ENCODE measurements at regions of chr2 and their contacts with region 1.

Region 1: DNA sequence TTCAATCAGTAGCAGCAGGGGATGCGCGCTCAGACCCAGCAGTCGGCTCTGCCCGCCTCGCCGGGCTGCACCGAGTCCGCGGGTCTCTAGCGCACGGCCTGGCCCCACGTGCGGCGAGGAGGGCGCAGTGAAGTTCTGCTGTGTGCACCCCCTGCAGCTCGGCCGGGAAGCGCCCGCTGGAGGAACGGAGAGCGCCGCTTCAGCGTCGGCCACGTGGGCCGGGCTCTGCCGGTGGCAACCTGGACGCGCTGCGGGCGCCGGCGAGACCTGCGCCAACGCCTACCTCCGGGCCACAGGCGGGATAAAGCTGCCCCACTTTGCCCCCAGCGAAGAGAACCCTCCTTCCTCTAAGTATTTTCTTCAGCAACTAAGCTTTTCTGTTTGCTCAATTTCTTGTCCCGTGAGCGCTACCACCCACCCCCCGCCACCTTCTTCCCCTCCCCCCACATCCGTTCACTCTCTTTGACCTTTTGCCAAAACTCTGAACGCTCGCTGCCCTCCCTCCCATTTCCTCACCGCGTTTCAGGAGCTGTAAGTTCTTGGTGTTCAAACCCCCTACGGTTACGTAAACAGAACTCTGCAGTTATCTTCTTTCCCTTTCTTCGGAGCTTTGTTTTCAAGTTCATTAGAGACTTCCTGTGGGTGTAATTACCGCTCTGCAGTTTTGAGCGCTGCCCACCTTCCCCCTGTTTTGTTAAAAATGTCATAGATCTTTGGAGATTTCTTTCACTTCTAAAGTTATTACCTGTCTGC is 42.6 kb upstream of the EDAR start:
- DNase-seq: peak; percentile 45 to 98 (median 93)
- ATAC-seq: peak; percentile 83
- H3K4me3 ChIP-seq: peak overlapping the region; percentile 58
- H3K4me3 Mint-ChIP-seq: peak overlapping the region; percentile 45 to 91 (median 77)
- H3K27ac ChIP-seq: peak overlapping the region; percentile 83
- H3K27ac Mint-ChIP-seq: peak overlapping the region; percentile 84 to 99 (median 98)
- H3K4me1 ChIP-seq: peaks cover 44 to 72% of the 10 kb centered on the region in 2 donors
- H3K4me1 Mint-ChIP-seq: peaks cover 33 to 84% (median 68%) of the 10 kb centered on the region in 7 donors
- H3K27me3 ChIP-seq: no peaks in the 10 kb centered on the region
- H3K27me3 Mint-ChIP-seq: no peaks in the 10 kb centered on the region

Region 2: GRCh38 chr2:108855194-108855593 is 176.5 kb before region 1 on chr2:
- CTCF ChIA-PET with region 1: no interaction called
- POLR2A ChIA-PET with region 1: no interaction called
- intact Hi-C with region 1: loop called in 1 of 2 experiments (anchors 1 kb)
- DNase-seq: peak in 6 of 9 donors; percentile 27 to 66 (median 54)
- ATAC-seq: peak; percentile 85
- H3K4me3 ChIP-seq: no peak overlapping the region
- H3K4me3 Mint-ChIP-seq: no peak overlapping the region
- H3K27ac ChIP-seq: no peak overlapping the region
- H3K27ac Mint-ChIP-seq: no peak overlapping the region
- H3K4me1 ChIP-seq: no peaks in the 10 kb centered on the region
- H3K4me1 Mint-ChIP-seq: peaks cover 0 to 8% (median 4%) of the 10 kb centered on the region in 7 donors
- H3K27me3 ChIP-seq: no peaks in the 10 kb centered on the region
- H3K27me3 Mint-ChIP-seq: no peaks in the 10 kb centered on the region

Region 3: GRCh38 chr2:108988796-108989713 is 42.6 kb before region 1 on chr2 and contains the start of gene EDAR:
- CTCF ChIA-PET with region 1: interaction called, 29 read pairs
- POLR2A ChIA-PET with region 1: interaction called, 49 read pairs
- intact Hi-C with region 1: loop called in 1 of 2 experiments (anchors 1 kb)
- DNase-seq: peak; percentile 24 to 72 (median 61)
- ATAC-seq: peak; percentile 85
- H3K4me3 ChIP-seq: peak within 1 kb of the TSS; percentile 80
- H3K4me3 Mint-ChIP-seq: peak within 1 kb of the TSS; percentile 77 to 99 (median 96)
- H3K27ac ChIP-seq: peak within 1 kb of the TSS; percentile 74
- H3K27ac Mint-ChIP-seq: peak within 1 kb of the TSS in 8 of 9 donors; percentile 83 to 98 (median 96)
- H3K4me1 ChIP-seq: peaks cover 2 to 35% of the 10 kb centered on the region in 2 donors
- H3K4me1 Mint-ChIP-seq: peaks cover 21 to 74% (median 69%) of the 10 kb centered on the region in 7 donors
- H3K27me3 ChIP-seq: no peaks in the 10 kb centered on the region
- H3K27me3 Mint-ChIP-seq: peaks cover 0 to 37% (median 0%) of the 10 kb centered on the region in 5 donors
- total RNA-seq, gene EDAR: 0.17 to 26.8 (median 21.6) TPM

Region 4: GRCh38 chr2:109046925-109047508 is 15.4 kb after region 1 on chr2:
- CTCF ChIA-PET with region 1: no interaction called
- POLR2A ChIA-PET with region 1: interaction called, 19 read pairs
- intact Hi-C with region 1: loop called in 1 of 2 experiments (anchors 1 kb)
- DNase-seq: no peak
- ATAC-seq: peak; percentile 40
- H3K4me3 ChIP-seq: no peak overlapping the region
- H3K4me3 Mint-ChIP-seq: peak overlapping the region in 4 of 10 donors; percentile 29 to 56 (median 53)
- H3K27ac ChIP-seq: no peak overlapping the region
- H3K27ac Mint-ChIP-seq: peak overlapping the region in 5 of 9 donors; percentile 18 to 84 (median 74)
- H3K4me1 ChIP-seq: peaks cover 0 to 23% of the 10 kb centered on the region in 2 donors
- H3K4me1 Mint-ChIP-seq: peaks cover 5 to 61% (median 44%) of the 10 kb centered on the region in 7 donors
- H3K27me3 ChIP-seq: no peaks in the 10 kb centered on the region
- H3K27me3 Mint-ChIP-seq: peaks cover 0 to 2% (median 0%) of the 10 kb centered on the region in 5 donors

Region 5: GRCh38 chr2:109128048-109128465 is 96.4 kb after region 1 on chr2:
- CTCF ChIA-PET with region 1: interaction called, 3 read pairs
- POLR2A ChIA-PET with region 1: interaction called, 28 read pairs
- intact Hi-C with region 1: loop called (anchors 1 to 5 kb)
- DNase-seq: peak; percentile 49 to 76 (median 70)
- ATAC-seq: peak; percentile 80
- H3K4me3 ChIP-seq: peak overlapping the region; percentile 64
- H3K4me3 Mint-ChIP-seq: peak overlapping the region; percentile 81 to 100 (median 87)
- H3K27ac ChIP-seq: peak overlapping the region; percentile 67
- H3K27ac Mint-ChIP-seq: peak overlapping the region in 8 of 9 donors; percentile 64 to 93 (median 80)
- H3K4me1 ChIP-seq: peaks cover 0 to 16% of the 10 kb centered on the region in 2 donors
- H3K4me1 Mint-ChIP-seq: peaks cover 24 to 68% (median 55%) of the 10 kb centered on the region in 7 donors
- H3K27me3 ChIP-seq: no peaks in the 10 kb centered on the region
- H3K27me3 Mint-ChIP-seq: peaks cover 0 to 54% (median 0%) of the 10 kb centered on the region in 5 donors

Region 6: GRCh38 chr2:109371822-109372568 is 340.3 kb after region 1 on chr2:
- CTCF ChIA-PET with region 1: no interaction called
- POLR2A ChIA-PET with region 1: no interaction called
- intact Hi-C with region 1: no loop called
- DNase-seq: peak in 1 of 9 donors; percentile 2
- ATAC-seq: no peak
- H3K4me3 ChIP-seq: no peak overlapping the region
- H3K4me3 Mint-ChIP-seq: no peak overlapping the region
- H3K27ac ChIP-seq: no peak overlapping the region
- H3K27ac Mint-ChIP-seq: no peak overlapping the region
- H3K4me1 ChIP-seq: no peaks in the 10 kb centered on the region
- H3K4me1 Mint-ChIP-seq: peaks cover 0 to 11% (median 0%) of the 10 kb centered on the region in 7 donors
- H3K27me3 ChIP-seq: no peaks in the 10 kb centered on the region
- H3K27me3 Mint-ChIP-seq: peaks cover 0 to 3% (median 0%) of the 10 kb centered on the region in 5 donors

Region 7: DNA sequence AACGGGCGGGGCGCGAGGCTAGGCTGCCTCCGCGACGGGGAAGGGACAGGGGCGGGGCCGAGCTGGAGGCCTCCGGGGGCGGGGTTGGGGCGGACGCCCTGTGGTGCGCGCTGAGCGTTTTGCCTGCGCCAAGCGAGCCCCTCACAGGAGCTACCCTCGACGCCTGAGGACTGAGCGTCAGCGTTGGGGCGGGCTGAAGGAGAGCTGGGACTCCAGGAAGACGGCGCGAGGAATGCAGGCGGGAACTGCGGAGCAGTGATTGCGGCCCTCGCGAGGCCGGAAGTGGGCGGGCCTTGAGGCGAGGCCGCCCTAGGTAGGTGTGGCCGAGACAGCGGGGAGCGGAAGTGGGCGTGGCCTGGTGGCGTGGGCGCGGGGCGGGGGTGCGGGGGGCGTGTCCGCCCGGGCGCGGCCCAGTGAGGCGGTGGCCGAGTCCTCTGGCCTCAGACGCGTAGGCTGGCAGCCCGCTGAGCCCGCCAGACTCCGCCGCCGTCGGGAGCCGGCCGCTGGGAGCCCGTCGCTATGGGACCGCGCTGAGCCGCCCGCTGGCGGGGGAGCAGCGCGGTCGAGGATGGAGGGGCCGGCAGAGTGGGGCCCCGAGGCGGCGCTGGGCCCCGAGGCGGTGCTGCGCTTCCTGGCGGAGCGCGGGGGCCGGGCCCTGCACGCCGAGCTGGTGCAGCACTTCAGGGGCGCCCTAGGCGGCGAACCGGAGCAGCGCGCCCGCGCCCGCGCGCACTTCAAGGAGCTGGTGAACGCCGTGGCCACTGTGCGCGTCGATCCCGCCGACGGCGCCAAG is 582.5 kb after region 1 on chr2 and contains the starts of genes SEPTIN10 and SOWAHC:
- CTCF ChIA-PET with region 1: no interaction called
- POLR2A ChIA-PET with region 1: no interaction called
- intact Hi-C with region 1: loop called in 1 of 2 experiments (anchors 5 kb)
- DNase-seq: peak; percentile 71 to 86 (median 84)
- ATAC-seq: peak; percentile 96
- H3K4me3 ChIP-seq: peak within 1 kb of the TSS; percentile 64
- H3K4me3 Mint-ChIP-seq: peak within 1 kb of the TSS; percentile 85 to 96 (median 90)
- H3K27ac ChIP-seq: no peak within 1 kb of the TSS
- H3K27ac Mint-ChIP-seq: peak within 1 kb of the TSS in 8 of 9 donors; percentile 27 to 89 (median 80)
- H3K4me1 ChIP-seq: no peaks in the 10 kb centered on the region
- H3K4me1 Mint-ChIP-seq: peaks cover 0 to 26% (median 16%) of the 10 kb centered on the region in 7 donors
- H3K27me3 ChIP-seq: peaks cover 3 to 23% of the 10 kb centered on the region in 2 donors
- H3K27me3 Mint-ChIP-seq: peaks cover 58 to 83% (median 62%) of the 10 kb centered on the region in 5 donors
- total RNA-seq, gene SEPTIN10: 0.94 to 5.9 (median 2.0) TPM
- total RNA-seq, gene SOWAHC: 0.17 to 1.2 (median 0.94) TPM

Region 8: DNA sequence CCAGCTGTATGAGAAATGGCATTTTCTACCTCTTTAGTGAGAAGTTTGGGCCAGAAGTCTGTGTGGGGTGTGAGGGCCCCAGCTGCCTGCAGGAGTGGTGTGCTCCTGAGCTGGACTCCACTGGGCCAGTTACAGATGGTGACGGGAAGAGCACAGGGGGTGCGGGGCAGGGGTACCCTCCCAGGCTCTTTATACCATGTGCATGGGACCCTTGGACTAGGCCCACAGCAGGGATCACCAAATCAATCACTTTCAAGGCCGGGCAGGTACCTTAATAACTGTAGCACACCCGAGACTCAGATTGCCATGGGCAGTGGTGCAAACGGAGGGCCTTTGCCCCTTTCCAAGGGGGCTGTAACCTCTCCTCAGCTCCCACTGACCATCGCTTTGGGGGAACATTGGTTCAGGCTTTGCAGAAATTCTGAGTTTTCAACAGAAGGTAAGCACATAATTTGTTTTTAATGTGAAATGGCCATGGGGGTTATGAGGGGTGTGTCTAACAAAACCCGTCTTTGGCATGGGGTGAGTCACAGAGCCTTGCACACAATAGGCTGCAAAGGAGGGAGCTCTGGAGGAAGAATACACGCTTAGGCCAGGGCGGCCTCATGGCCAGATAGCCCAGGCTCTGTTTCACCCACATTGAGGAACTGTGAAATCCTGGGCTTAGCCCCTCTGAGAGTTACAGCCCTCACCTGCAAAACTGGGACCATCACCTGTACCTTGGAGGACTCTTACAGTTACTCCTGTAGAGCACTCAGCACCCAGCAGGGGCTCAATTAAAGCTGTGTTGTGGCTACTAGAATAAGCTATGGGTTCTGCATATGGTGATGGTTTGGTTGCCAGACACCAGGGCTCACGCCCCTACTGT is 1948.1 kb after region 1 on chr2:
- CTCF ChIA-PET with region 1: no interaction called
- POLR2A ChIA-PET with region 1: no interaction called
- intact Hi-C with region 1: no loop called
- DNase-seq: no peak
- ATAC-seq: no peak
- H3K4me3 ChIP-seq: no peak overlapping the region
- H3K4me3 Mint-ChIP-seq: no peak overlapping the region
- H3K27ac ChIP-seq: no peak overlapping the region
- H3K27ac Mint-ChIP-seq: no peak overlapping the region
- H3K4me1 ChIP-seq: no peaks in the 10 kb centered on the region
- H3K4me1 Mint-ChIP-seq: peaks cover 0 to 3% (median 0%) of the 10 kb centered on the region in 7 donors
- H3K27me3 ChIP-seq: no peaks in the 10 kb centered on the region
- H3K27me3 Mint-ChIP-seq: peaks cover 0 to 12% (median 0%) of the 10 kb centered on the region in 5 donors

Measured in naive thymus-derived CD4-positive, alpha-beta T cell (primary cell).